B cell (primary cell): ENCODE measurements at regions of chr1 and their contacts with region 1.

Region 1: DNA sequence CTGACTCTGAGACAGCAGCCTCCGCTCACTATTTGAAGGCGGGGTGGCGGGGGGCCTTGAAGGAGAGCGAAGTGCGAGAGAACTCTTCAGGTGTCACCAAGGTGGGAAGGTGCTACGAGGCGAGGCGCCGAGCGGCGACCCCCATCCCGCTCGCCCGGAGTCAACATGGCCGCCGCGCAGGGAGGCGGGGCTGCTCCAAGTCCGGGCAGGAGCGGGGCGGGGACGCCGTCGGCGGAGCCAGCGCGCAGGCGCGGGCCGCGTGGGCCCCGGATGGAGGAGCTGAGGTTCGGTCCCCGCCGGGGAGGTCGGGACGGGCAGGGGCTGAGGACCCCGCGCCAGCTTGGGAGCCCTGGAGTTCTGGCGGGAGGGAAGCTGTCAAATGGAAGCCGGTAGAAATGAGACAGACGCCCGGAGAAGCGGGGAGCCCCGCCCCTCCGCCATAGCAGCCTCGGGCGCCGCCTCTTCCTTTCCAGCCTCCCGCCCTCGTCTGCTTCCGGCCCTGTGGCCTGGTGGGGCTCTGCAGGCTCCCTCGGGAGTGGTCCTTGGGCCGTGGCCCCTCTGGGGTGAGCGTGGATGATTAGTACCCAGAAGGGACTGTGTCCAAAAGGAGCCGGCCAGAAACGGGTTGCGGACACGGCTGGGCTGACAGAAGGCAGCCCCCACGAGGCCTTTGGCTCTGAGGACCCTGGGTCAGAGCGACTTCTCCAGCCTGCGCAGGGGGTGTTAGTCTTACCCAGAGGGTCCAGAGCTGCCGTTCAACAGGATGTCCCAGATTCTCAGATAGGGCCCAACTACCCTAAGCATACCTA is at the start of gene PIGV:
- DNase-seq: peak; percentile 95
- ATAC-seq: peak; percentile 77
- H3K4me3 ChIP-seq: peak within 1 kb of the TSS; percentile 75 to 94 (median 91)
- H3K4me3 Mint-ChIP-seq: peak within 1 kb of the TSS; percentile 91
- H3K27ac ChIP-seq: peak within 1 kb of the TSS; percentile 82 to 86
- H3K27ac Mint-ChIP-seq: peak within 1 kb of the TSS; percentile 99
- H3K4me1 ChIP-seq: peaks cover 30 to 44% of the 10 kb centered on the region in 2 donors
- H3K4me1 Mint-ChIP-seq: peaks cover 48% of the 10 kb centered on the region
- H3K27me3 ChIP-seq: no peaks in the 10 kb centered on the region
- H3K27me3 Mint-ChIP-seq: no peaks in the 10 kb centered on the region
- CTCF ChIP-seq: no peak
- total RNA-seq, gene PIGV: 16.1 and 17.4 TPM in 2 replicates

Region 2: GRCh38 chr1:26472901-26473845 is 314.7 kb before region 1 on chr1:
- CTCF ChIA-PET with region 1: interaction called, 3 read pairs
- POLR2A ChIA-PET with region 1: no interaction called
- intact Hi-C with region 1: loop called (anchors 1 kb)
- DNase-seq: peak; percentile 98
- ATAC-seq: peak; percentile 79
- H3K4me3 ChIP-seq: peak overlapping the region; percentile 72 to 91 (median 80)
- H3K4me3 Mint-ChIP-seq: peak overlapping the region; percentile 90
- H3K27ac ChIP-seq: peak overlapping the region; percentile 95 to 98
- H3K27ac Mint-ChIP-seq: peak overlapping the region; percentile 90
- H3K4me1 ChIP-seq: peaks cover 35% of the 10 kb centered on the region in 2 donors
- H3K4me1 Mint-ChIP-seq: peaks cover 58% of the 10 kb centered on the region
- H3K27me3 ChIP-seq: no peaks in the 10 kb centered on the region
- H3K27me3 Mint-ChIP-seq: no peaks in the 10 kb centered on the region
- CTCF ChIP-seq: no peak

Region 3: GRCh38 chr1:26483980-26484379 is 303.9 kb before region 1 on chr1:
- CTCF ChIA-PET with region 1: no interaction called
- POLR2A ChIA-PET with region 1: no interaction called
- intact Hi-C with region 1: no loop called
- DNase-seq: no peak
- ATAC-seq: no peak
- H3K4me3 ChIP-seq: no peak overlapping the region
- H3K4me3 Mint-ChIP-seq: no peak overlapping the region
- H3K27ac ChIP-seq: no peak overlapping the region
- H3K27ac Mint-ChIP-seq: peak overlapping the region; percentile 41
- H3K4me1 ChIP-seq: no peaks in the 10 kb centered on the region
- H3K4me1 Mint-ChIP-seq: peaks cover 2% of the 10 kb centered on the region
- H3K27me3 ChIP-seq: no peaks in the 10 kb centered on the region
- H3K27me3 Mint-ChIP-seq: no peaks in the 10 kb centered on the region
- CTCF ChIP-seq: no peak

Region 4: GRCh38 chr1:26593385-26593784 is 194.5 kb before region 1 on chr1:
- CTCF ChIA-PET with region 1: interaction called, 479 read pairs
- POLR2A ChIA-PET with region 1: no interaction called
- intact Hi-C with region 1: loop called (anchors 1 kb)
- DNase-seq: no peak
- ATAC-seq: no peak
- H3K4me3 ChIP-seq: no peak overlapping the region
- H3K4me3 Mint-ChIP-seq: no peak overlapping the region
- H3K27ac ChIP-seq: no peak overlapping the region
- H3K27ac Mint-ChIP-seq: no peak overlapping the region
- H3K4me1 ChIP-seq: no peaks in the 10 kb centered on the region
- H3K4me1 Mint-ChIP-seq: peaks cover 4% of the 10 kb centered on the region
- H3K27me3 ChIP-seq: no peaks in the 10 kb centered on the region
- H3K27me3 Mint-ChIP-seq: no peaks in the 10 kb centered on the region
- CTCF ChIP-seq: no peak

Region 5: GRCh38 chr1:26695356-26696118 is 92.4 kb before region 1 on chr1 and contains the start of gene ARID1A:
- CTCF ChIA-PET with region 1: interaction called, 130 read pairs
- POLR2A ChIA-PET with region 1: interaction called, 50 read pairs
- intact Hi-C with region 1: loop called (anchors 1 kb)
- DNase-seq: peak; percentile 99
- ATAC-seq: peak; percentile 62
- H3K4me3 ChIP-seq: peak within 1 kb of the TSS; percentile 22 to 84 (median 73)
- H3K4me3 Mint-ChIP-seq: peak within 1 kb of the TSS; percentile 91
- H3K27ac ChIP-seq: peak within 1 kb of the TSS; percentile 67 to 93
- H3K27ac Mint-ChIP-seq: peak within 1 kb of the TSS; percentile 93
- H3K4me1 ChIP-seq: peaks cover 46 to 48% of the 10 kb centered on the region in 2 donors
- H3K4me1 Mint-ChIP-seq: peaks cover 30% of the 10 kb centered on the region
- H3K27me3 ChIP-seq: no peaks in the 10 kb centered on the region
- H3K27me3 Mint-ChIP-seq: no peaks in the 10 kb centered on the region
- CTCF ChIP-seq: no peak
- total RNA-seq, gene ARID1A: 150 and 152 TPM in 2 replicates

Region 6: GRCh38 chr1:26771643-26772321 is 16.1 kb before region 1 on chr1:
- CTCF ChIA-PET with region 1: interaction called, 38 read pairs
- POLR2A ChIA-PET with region 1: no interaction called
- intact Hi-C with region 1: no loop called
- DNase-seq: no peak
- ATAC-seq: no peak
- H3K4me3 ChIP-seq: no peak overlapping the region
- H3K4me3 Mint-ChIP-seq: no peak overlapping the region
- H3K27ac ChIP-seq: peak overlapping the region in 1 of 2 donors; percentile 46
- H3K27ac Mint-ChIP-seq: peak overlapping the region; percentile 65
- H3K4me1 ChIP-seq: no peaks in the 10 kb centered on the region
- H3K4me1 Mint-ChIP-seq: no peaks in the 10 kb centered on the region
- H3K27me3 ChIP-seq: no peaks in the 10 kb centered on the region
- H3K27me3 Mint-ChIP-seq: no peaks in the 10 kb centered on the region
- CTCF ChIP-seq: no peak

Region 7: DNA sequence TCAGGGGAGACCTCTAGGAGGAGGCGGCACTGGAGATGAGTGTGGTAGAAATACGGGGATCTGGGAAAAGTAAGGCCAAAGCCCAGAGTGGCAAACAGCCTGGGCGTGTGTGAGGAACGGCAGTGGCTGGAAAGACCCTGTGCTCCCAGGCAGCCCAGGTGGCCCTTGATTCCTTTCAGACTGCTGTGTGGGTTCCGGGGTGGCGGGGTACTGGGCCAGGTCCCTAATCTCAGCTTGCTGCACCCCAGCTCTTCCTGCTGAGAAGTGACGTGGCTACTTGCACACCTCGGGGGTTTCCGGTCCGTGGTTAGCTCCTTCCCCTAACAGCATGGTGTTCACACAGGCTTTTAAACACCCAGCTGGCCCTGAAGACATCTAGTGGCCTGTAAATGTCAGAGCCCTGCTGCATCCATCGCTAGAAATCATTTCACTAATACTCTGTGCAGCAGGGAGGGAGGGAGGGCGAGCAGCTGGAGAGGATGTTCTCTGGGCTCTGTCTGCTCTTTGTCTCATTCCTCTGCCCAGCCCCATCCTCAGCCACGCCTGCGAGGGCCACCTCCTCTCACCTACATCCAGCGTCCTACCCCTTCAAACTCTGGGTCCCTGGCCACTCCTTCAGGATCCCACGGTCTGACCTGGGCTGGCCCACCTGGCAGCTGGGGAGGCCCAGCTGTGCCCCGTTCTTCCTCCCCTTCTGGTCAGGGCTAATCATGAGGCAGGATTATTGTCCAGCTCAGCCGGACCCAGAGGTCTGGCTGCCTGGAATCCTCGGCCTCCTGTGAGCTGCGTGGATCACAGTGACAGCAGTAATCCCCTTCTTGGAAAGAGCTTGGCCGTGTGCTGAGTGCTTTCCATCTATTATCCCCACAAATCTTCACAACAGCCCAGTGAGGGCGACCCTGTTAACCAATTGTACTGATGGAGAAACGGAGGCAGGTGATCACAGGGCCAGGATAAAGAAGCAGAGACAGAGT is 45.8 kb after region 1 on chr1:
- CTCF ChIA-PET with region 1: interaction called, 14 read pairs
- POLR2A ChIA-PET with region 1: no interaction called
- intact Hi-C with region 1: loop called (anchors 1 kb)
- DNase-seq: peak; percentile 95
- ATAC-seq: peak; percentile 96
- H3K4me3 ChIP-seq: peak overlapping the region in 4 of 5 experiments; percentile 3 to 54 (median 30)
- H3K4me3 Mint-ChIP-seq: peak overlapping the region; percentile 78
- H3K27ac ChIP-seq: peak overlapping the region; percentile 83 to 98
- H3K27ac Mint-ChIP-seq: peak overlapping the region; percentile 92
- H3K4me1 ChIP-seq: peaks cover 30 to 48% of the 10 kb centered on the region in 2 donors
- H3K4me1 Mint-ChIP-seq: peaks cover 56% of the 10 kb centered on the region
- H3K27me3 ChIP-seq: no peaks in the 10 kb centered on the region
- H3K27me3 Mint-ChIP-seq: no peaks in the 10 kb centered on the region
- CTCF ChIP-seq: peak; percentile 58